HEK293 (cell line): ENCODE measurements at regions of chr1 and their contacts with region 1.

Region 1: DNA sequence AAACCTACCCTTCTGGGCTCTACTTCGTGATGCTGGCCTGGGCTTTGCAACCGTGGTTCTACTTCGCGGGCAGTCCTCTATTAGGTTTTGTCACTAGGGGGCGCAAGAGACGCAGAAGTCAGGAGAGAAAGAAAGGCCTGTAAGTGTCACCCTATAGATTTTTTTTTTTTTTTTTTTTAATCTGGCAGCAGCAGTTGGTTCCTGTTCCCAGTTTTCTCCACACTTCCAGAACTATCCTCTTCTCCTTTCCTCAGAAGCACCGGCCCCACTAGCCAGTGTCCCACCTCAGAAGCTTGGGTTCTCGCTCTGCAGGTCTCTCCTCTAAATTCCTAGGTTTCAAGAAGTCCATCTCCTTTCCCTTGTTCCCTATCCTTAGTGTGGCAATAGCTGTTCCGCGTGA is 9.1 kb upstream of the LCE2D start:
- H3K4me3 ChIP-seq: no peak overlapping the region
- H3K27ac ChIP-seq: no peak overlapping the region
- H3K4me1 ChIP-seq: no peaks in the 10 kb centered on the region
- CTCF ChIP-seq: 0 out of 2 replicates have a peak, but pooled peaks have one; percentile 35

Region 2: GRCh38 chr1:152585586-152585985 is 68.5 kb before region 1 on chr1:
- CTCF ChIA-PET with region 1: no interaction called
- POLR2A ChIA-PET with region 1: no interaction called
- H3K4me3 ChIP-seq: no peak overlapping the region
- H3K27ac ChIP-seq: no peak overlapping the region
- H3K4me1 ChIP-seq: no peaks in the 10 kb centered on the region
- CTCF ChIP-seq: no peak

Region 3: GRCh38 chr1:152630632-152631031 is 23.5 kb before region 1 on chr1:
- CTCF ChIA-PET with region 1: interaction called, 11 read pairs
- POLR2A ChIA-PET with region 1: no interaction called
- H3K4me3 ChIP-seq: no peak overlapping the region
- H3K27ac ChIP-seq: no peak overlapping the region
- H3K4me1 ChIP-seq: no peaks in the 10 kb centered on the region
- CTCF ChIP-seq: no peak

Region 4: DNA sequence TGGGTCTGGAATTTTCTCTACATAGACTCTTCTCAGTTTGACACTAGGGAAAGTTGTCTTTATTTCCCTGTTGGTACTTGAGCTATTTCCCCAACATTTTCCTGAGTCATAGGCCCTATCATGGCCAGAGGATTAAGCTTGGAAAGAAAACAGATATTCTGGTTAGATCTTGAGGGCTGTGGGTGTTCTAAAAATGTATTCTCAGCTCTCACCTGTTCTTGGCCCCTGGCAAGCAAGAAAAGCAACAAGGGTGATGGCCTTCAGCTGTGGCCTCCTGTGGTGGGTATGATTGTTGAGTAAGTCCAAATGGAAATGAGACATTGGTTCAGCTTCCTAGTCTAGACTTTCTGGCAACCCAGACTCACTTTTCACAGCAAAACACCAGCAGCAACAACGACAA is 13.8 kb before region 1 on chr1:
- CTCF ChIA-PET with region 1: interaction called, 39 read pairs
- POLR2A ChIA-PET with region 1: no interaction called
- H3K4me3 ChIP-seq: no peak overlapping the region
- H3K27ac ChIP-seq: no peak overlapping the region
- H3K4me1 ChIP-seq: no peaks in the 10 kb centered on the region
- CTCF ChIP-seq: no peak

Region 5: GRCh38 chr1:152783095-152783494 is 129.0 kb after region 1 on chr1:
- CTCF ChIA-PET with region 1: interaction called, 12 read pairs
- POLR2A ChIA-PET with region 1: no interaction called
- H3K4me3 ChIP-seq: no peak overlapping the region
- H3K27ac ChIP-seq: no peak overlapping the region
- H3K4me1 ChIP-seq: no peaks in the 10 kb centered on the region; the same call in 1 of the 2 replicates
- CTCF ChIP-seq: no peak